ENCODE measurements at regions of chr2 and their contacts with region 1.

Region 1: GRCh38 chr2:60317844-60318243 is 235.6 kb downstream of the BCL11A start:
- DNase-seq: no peak
- ATAC-seq: peak; percentile 85
- H3K4me3 Mint-ChIP-seq: peak overlapping the region; percentile 59
- H3K27ac Mint-ChIP-seq: peak overlapping the region; percentile 82
- H3K4me1 Mint-ChIP-seq: peaks cover 82% of the 10 kb centered on the region
- H3K27me3 Mint-ChIP-seq: no peaks in the 10 kb centered on the region
- CTCF ChIP-seq: no peak

Region 2: DNA sequence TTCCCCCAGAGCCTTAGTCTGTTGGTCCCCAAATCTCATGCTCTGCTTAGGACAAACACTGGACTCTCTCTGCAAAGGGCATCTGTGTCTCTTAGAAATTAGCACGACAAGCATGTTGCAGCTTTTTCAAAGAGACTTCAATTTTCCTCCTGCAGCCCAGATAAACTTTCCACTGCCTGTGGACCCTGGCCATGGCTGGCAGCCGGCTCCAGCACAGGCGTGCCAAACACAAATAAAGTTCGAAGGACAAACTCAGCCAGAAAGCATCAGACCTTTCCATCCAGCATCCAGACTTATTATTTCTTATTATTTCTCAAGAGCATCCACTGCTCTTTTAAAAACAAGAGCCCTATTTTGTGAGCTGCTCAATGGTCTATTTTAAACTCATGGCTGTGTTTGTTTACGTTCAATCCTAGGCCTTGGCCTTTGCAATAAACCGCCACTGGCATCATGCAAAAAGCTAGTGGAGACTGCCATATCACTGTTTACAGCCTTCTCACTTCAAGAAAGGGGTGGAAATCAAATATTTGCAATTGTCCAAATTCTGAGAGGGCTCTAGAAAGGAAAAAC is 65.2 kb before region 1 on chr2:
- CTCF ChIA-PET with region 1: no interaction called
- POLR2A ChIA-PET with region 1: no interaction called
- intact Hi-C with region 1: no loop called
- DNase-seq: no peak
- ATAC-seq: no peak
- H3K4me3 Mint-ChIP-seq: no peak overlapping the region
- H3K27ac Mint-ChIP-seq: no peak overlapping the region
- H3K4me1 Mint-ChIP-seq: no peaks in the 10 kb centered on the region
- H3K27me3 Mint-ChIP-seq: no peaks in the 10 kb centered on the region
- CTCF ChIP-seq: no peak

Region 3: DNA sequence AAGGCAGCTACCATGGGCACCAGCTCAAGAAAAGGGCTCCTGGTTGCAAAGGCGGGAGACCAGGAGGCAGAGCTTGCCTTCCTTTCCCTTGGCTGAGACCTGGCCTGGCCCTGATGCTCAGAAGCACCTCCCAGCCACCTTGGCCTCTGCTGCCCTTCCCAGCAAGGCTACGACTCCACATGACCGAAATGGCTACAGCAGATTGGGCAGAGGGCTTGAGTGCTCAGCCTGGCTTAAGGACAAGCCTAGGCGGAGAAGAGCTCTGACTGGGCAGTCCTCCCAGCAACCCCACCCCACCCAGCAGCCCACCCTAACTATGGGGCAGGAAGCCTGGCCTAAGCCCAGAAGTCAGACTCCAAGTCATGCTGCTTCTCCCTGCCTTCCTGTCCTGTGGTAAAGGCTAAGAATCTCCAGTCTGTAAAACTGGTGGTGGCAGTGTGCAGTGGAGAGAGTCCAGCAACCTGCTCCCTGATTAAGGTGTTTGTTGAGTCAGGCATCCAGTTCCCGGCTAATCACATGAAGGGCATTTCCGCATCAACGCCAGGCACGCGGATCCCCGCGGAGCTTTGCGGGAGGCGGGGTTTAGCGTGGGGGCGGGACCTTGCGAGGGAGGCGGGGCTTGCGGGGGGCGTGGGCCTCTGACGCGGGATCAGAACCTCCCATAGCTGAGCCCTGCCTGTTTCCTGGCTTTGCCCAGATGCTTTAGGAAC is 20.4 kb before region 1 on chr2:
- CTCF ChIA-PET with region 1: no interaction called
- POLR2A ChIA-PET with region 1: interaction called, 4 read pairs
- intact Hi-C with region 1: loop called (anchors 1 kb)
- DNase-seq: no peak
- ATAC-seq: no peak
- H3K4me3 Mint-ChIP-seq: no peak overlapping the region
- H3K27ac Mint-ChIP-seq: peak overlapping the region; percentile 24
- H3K4me1 Mint-ChIP-seq: peaks cover 35% of the 10 kb centered on the region
- H3K27me3 Mint-ChIP-seq: no peaks in the 10 kb centered on the region
- CTCF ChIP-seq: no peak

Region 4: GRCh38 chr2:60331115-60331805 is 13.4 kb after region 1 on chr2:
- CTCF ChIA-PET with region 1: no interaction called
- POLR2A ChIA-PET with region 1: no interaction called
- intact Hi-C with region 1: loop called (anchors 1 kb)
- DNase-seq: no peak
- ATAC-seq: no peak
- H3K4me3 Mint-ChIP-seq: no peak overlapping the region
- H3K27ac Mint-ChIP-seq: no peak overlapping the region
- H3K4me1 Mint-ChIP-seq: peaks cover 35% of the 10 kb centered on the region
- H3K27me3 Mint-ChIP-seq: no peaks in the 10 kb centered on the region
- CTCF ChIP-seq: no peak

Region 5: GRCh38 chr2:60413814-60414168 is 95.9 kb after region 1 on chr2:
- CTCF ChIA-PET with region 1: no interaction called
- POLR2A ChIA-PET with region 1: no interaction called
- intact Hi-C with region 1: loop called (anchors 2 kb)
- DNase-seq: peak; percentile 41
- ATAC-seq: peak; percentile 72
- H3K4me3 Mint-ChIP-seq: peak overlapping the region; percentile 8
- H3K27ac Mint-ChIP-seq: peak overlapping the region; percentile 90
- H3K4me1 Mint-ChIP-seq: peaks cover 87% of the 10 kb centered on the region
- H3K27me3 Mint-ChIP-seq: no peaks in the 10 kb centered on the region
- CTCF ChIP-seq: no peak

Region 6: GRCh38 chr2:61100801-61101200 is 783.0 kb after region 1 on chr2:
- CTCF ChIA-PET with region 1: no interaction called
- POLR2A ChIA-PET with region 1: no interaction called
- intact Hi-C with region 1: no loop called
- DNase-seq: no peak
- ATAC-seq: no peak
- H3K4me3 Mint-ChIP-seq: no peak overlapping the region
- H3K27ac Mint-ChIP-seq: no peak overlapping the region
- H3K4me1 Mint-ChIP-seq: no peaks in the 10 kb centered on the region
- H3K27me3 Mint-ChIP-seq: no peaks in the 10 kb centered on the region
- CTCF ChIP-seq: no peak

Measured in activated B cell treated with CpG ODN at 0.5 μM for 24 hours (primary cell).